Naive thymus-derived CD4-positive, alpha-beta T cell (primary cell): ENCODE measurements at regions of chr22 and their contacts with region 1.

Region 1: DNA sequence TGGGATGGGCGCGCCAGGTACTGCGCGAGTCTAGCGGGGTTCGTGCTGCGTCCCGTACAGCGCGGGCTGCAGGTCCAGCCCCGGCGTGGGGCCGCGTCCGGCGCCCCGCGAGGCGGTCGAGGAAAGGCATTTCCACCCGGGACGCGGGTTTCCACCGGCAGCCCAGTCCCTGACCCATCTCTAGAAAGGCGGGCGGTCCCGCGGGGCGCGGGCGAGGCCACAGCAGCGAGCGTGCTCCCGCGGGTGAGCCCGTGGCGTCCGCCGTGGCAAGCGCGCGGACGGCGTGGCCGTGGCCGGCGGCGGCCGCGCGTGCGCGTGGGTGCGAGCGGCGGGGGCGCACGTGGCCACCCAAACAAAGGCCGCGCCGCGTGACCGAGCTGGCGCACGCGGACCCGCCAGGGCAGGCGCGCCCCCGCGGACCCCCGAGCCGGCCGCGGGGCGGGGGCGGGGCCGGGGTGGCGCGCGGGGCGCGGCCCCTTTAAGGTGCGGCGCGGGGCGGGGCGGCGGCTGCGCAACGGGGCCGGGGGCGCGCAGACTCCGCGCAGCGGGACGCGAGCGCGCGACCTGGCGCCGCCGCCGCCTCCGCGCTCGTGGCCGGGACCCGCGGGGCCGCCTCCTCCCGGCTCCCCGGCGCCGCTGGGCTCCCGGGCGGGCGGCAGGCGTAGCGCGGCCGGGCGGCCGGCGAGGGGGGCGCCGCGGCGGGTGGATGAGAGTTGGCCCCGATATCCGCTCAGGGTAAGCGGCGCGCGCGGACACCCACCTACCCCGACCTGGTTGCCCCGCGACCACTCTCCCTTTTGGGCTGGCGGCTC is 39.3 kb upstream of the CELSR1 start:
- DNase-seq: peak; percentile 44 to 82 (median 65)
- ATAC-seq: peak; percentile 89
- H3K4me3 ChIP-seq: peak overlapping the region; percentile 66
- H3K4me3 Mint-ChIP-seq: peak overlapping the region; percentile 72 to 91 (median 84)
- H3K27ac ChIP-seq: peak overlapping the region; percentile 37
- H3K27ac Mint-ChIP-seq: peak overlapping the region in 7 of 9 donors; percentile 70 to 84 (median 77)
- H3K4me1 ChIP-seq: peaks cover 16 to 25% of the 10 kb centered on the region in 2 donors
- H3K4me1 Mint-ChIP-seq: peaks cover 36 to 51% (median 47%) of the 10 kb centered on the region in 7 donors
- H3K27me3 ChIP-seq: no peaks in the 10 kb centered on the region
- H3K27me3 Mint-ChIP-seq: no peaks in the 10 kb centered on the region

Region 2: DNA sequence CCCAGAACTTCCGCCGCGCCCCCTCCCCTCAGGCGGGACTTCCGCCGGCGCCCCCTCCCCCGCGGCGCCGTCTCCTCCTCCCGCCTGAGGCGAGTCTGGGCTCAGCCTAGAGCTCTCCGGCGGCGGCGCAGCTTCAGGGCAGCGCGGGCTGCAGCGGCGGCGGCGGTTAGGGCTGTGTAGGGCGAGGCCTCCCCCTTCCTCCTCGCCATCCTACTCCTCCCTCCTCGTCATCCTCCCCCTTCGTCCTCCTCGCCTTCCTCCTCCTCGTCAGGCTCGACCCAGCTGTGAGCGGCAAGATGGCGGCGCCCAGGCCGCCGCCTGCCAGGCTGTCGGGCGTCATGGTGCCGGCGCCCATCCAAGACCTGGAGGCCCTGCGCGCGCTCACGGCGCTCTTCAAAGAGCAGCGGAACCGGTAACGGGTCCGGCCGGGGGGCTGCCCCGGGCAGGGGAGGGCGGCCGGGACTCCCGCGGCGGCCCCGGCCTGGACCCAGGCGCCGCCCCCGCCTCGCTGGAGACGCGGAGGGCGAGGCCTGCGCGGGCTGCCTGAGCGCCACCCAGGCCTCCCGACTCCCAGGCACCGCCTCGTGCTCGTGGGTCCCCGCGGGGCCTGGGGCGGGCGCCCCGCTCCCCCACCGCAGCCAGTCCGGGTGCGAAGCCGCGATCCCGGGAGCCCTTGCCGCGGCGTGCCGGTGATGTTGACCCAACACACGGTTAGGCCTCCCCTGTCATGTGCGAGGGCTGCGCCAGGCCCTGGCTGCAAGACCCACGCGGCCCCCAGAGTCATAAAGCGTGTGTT is 904.8 kb before region 1 on chr22 and contains the start of gene ATXN10:
- CTCF ChIA-PET with region 1: no interaction called
- POLR2A ChIA-PET with region 1: no interaction called
- intact Hi-C with region 1: loop called in 1 of 2 experiments (anchors 5 kb)
- DNase-seq: peak; percentile 55 to 79 (median 74)
- ATAC-seq: peak; percentile 90
- H3K4me3 ChIP-seq: peak within 1 kb of the TSS; percentile 49
- H3K4me3 Mint-ChIP-seq: peak within 1 kb of the TSS; percentile 86 to 95 (median 90)
- H3K27ac ChIP-seq: peak within 1 kb of the TSS; percentile 75
- H3K27ac Mint-ChIP-seq: peak within 1 kb of the TSS; percentile 38 to 92 (median 88)
- H3K4me1 ChIP-seq: peaks cover 13 to 25% of the 10 kb centered on the region in 2 donors
- H3K4me1 Mint-ChIP-seq: peaks cover 23 to 43% (median 41%) of the 10 kb centered on the region in 7 donors
- H3K27me3 ChIP-seq: no peaks in the 10 kb centered on the region
- H3K27me3 Mint-ChIP-seq: peaks cover 4 to 10% (median 6%) of the 10 kb centered on the region in 5 donors
- total RNA-seq, gene ATXN10: 64.2 to 85.7 (median 73.1) TPM

Region 3: GRCh38 chr22:46592390-46592872 is 15.7 kb after region 1 on chr22:
- CTCF ChIA-PET with region 1: no interaction called
- POLR2A ChIA-PET with region 1: no interaction called
- intact Hi-C with region 1: no loop called
- DNase-seq: peak in 5 of 9 donors; percentile 38 to 59 (median 40)
- ATAC-seq: peak; percentile 49
- H3K4me3 ChIP-seq: no peak overlapping the region
- H3K4me3 Mint-ChIP-seq: peak overlapping the region; percentile 39 to 86 (median 77)
- H3K27ac ChIP-seq: no peak overlapping the region
- H3K27ac Mint-ChIP-seq: peak overlapping the region in 7 of 9 donors; percentile 22 to 89 (median 58)
- H3K4me1 ChIP-seq: peaks cover 14 to 15% of the 10 kb centered on the region in 2 donors
- H3K4me1 Mint-ChIP-seq: peaks cover 3 to 39% (median 21%) of the 10 kb centered on the region in 7 donors
- H3K27me3 ChIP-seq: no peaks in the 10 kb centered on the region
- H3K27me3 Mint-ChIP-seq: no peaks in the 10 kb centered on the region

Region 4: DNA sequence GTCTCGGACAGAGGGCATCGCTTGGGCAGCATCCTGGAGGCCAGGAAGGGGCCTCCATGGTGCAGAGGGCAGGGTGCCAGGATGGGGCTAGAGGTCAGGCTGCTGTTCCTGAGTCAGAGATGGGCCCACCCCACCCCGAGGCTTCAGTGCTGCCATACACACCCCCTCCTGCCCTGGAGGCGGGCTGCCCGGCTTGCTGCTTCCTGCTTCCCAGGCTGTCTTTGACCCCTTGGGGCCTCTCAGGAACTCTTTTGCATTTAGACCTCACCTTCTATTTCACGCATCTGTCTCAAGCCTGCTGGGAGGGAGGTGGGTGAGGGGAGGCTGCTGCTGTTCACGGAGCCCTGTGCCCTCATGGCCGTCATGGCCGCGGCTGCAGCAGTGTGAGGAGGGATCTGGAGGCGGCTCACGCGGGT is 36.9 kb after region 1 on chr22:
- CTCF ChIA-PET with region 1: no interaction called
- POLR2A ChIA-PET with region 1: no interaction called
- intact Hi-C with region 1: loop called (anchors 1 to 2 kb)
- DNase-seq: peak in 1 of 9 donors; percentile 33
- ATAC-seq: no peak
- H3K4me3 ChIP-seq: peak overlapping the region; percentile 71
- H3K4me3 Mint-ChIP-seq: peak overlapping the region; percentile 88 to 96 (median 92)
- H3K27ac ChIP-seq: no peak overlapping the region
- H3K27ac Mint-ChIP-seq: peak overlapping the region; percentile 72 to 95 (median 85)
- H3K4me1 ChIP-seq: peaks cover 23 to 24% of the 10 kb centered on the region in 2 donors
- H3K4me1 Mint-ChIP-seq: peaks cover 22 to 39% (median 29%) of the 10 kb centered on the region in 7 donors
- H3K27me3 ChIP-seq: no peaks in the 10 kb centered on the region
- H3K27me3 Mint-ChIP-seq: no peaks in the 10 kb centered on the region